SK-N-SH (cell line): ENCODE measurements at regions of chr10 and their contacts with region 1.

Region 1: GRCh38 chr10:100359529-100360150 is 12.6 kb downstream of the SCD start:
- DNase-seq: peak; percentile 57
- H3K4me3 ChIP-seq: no peak overlapping the region; a peak in 1 of 4 replicates
- H3K27ac ChIP-seq: peak overlapping the region in 1 of 2 experiments; percentile 76; a peak in 2 of 4 replicates
- H3K4me1 ChIP-seq: peaks cover 15 to 56% of the 10 kb centered on the region in 2 experiments
- H3K27me3 ChIP-seq: no peaks in the 10 kb centered on the region
- CTCF ChIP-seq: no peak
- EP300 ChIP-seq: peak in 1 of 2 experiments; percentile 60; a peak in 2 of 4 replicates
- RAD21 ChIP-seq: peak; percentile 1; the same call in 1 of the 2 replicates

Region 2: DNA sequence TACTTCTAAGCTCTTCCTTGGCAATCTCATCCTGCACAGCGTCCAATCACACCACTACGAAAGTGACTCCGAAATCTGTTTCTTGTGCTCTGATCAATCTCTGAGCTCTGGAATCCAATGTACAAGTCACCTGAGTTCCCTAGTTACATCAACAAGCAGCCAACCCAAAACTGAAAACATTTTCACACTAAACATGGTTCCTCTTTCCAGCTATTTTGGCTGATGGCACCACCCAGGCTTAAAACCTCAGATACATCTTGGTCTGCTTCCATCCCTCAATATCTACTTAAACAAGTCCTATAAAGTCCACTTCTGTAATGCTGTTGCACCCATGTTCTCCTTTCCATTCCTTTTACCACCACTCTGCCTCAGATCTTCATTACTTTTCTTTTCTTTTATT is 76.7 kb before region 1 on chr10:
- CTCF ChIA-PET with region 1: no interaction called
- POLR2A ChIA-PET with region 1: no interaction called
- DNase-seq: no peak
- H3K4me3 ChIP-seq: no peak overlapping the region
- H3K27ac ChIP-seq: no peak overlapping the region
- H3K4me1 ChIP-seq: peaks cover 5 to 8% of the 10 kb centered on the region in 2 experiments; a peak in 3 of 4 replicates
- H3K27me3 ChIP-seq: no peaks in the 10 kb centered on the region
- CTCF ChIP-seq: no peak
- EP300 ChIP-seq: no peak
- RAD21 ChIP-seq: no peak

Region 3: DNA sequence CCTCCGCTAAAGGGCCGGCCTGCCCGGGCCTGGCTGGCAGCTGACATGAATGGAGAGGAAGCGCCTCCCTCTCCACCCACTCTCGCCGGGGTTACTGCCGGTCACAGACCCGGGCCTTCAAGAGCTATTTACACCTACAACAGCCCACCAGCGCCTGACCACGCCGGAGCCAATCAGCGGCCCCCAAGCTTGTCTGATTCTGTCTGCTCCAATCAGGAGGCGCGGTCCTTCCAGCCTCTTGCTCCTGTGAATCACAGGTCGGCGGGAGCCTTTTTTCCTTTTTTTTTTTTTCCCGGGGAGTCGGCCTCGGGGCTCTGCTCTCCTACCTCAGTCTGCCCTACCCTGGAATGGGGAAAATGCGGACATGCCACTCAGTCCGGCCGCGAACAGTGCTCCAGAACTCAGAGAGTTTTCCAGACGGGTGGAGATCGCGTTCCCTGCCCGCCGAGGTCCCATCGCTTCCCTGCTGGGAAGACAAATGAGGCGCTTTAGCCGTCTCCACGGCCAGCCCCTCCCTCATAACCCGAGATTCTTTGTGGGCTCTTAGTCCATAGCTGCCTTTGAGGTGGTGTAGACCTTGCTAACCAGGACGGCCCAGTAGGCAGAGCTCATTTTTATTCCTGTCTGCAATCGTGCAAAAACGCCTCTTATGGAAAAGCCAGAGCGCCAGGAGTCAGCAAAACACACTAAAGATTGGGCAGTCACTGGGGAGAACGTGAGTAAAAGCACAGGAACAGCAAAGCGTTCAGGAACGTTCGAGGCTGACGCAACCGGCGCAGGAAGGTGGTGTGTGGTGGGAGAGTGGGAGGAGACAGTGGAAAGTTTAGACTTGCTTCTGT is 13.9 kb after region 1 on chr10:
- CTCF ChIA-PET with region 1: interaction called, 4 read pairs
- POLR2A ChIA-PET with region 1: interaction called, 14 read pairs
- DNase-seq: peak; percentile 92
- H3K4me3 ChIP-seq: peak overlapping the region; percentile 56 to 69
- H3K27ac ChIP-seq: peak overlapping the region; percentile 97 to 99
- H3K4me1 ChIP-seq: peaks cover 20 to 27% of the 10 kb centered on the region in 2 experiments
- H3K27me3 ChIP-seq: no peaks in the 10 kb centered on the region
- CTCF ChIP-seq: no peak
- EP300 ChIP-seq: peak; percentile 7 to 12; a peak in 1 of 4 replicates
- RAD21 ChIP-seq: peak; percentile 3